ENCODE measurements at regions of chr6 and their contacts with region 1.

Region 1: GRCh38 chr6:130020907-130021629 is 2.7 kb downstream of the L3MBTL3 start:
- DNase-seq: peak; percentile 87
- H3K4me3 Mint-ChIP-seq: peak overlapping the region; percentile 95
- H3K27ac Mint-ChIP-seq: peak overlapping the region; percentile 89
- H3K4me1 Mint-ChIP-seq: peaks cover 22% of the 10 kb centered on the region
- H3K27me3 Mint-ChIP-seq: no peaks in the 10 kb centered on the region

Region 2: GRCh38 chr6:129498950-129499842 is 521.9 kb before region 1 on chr6:
- CTCF ChIA-PET with region 1: interaction called, 10 read pairs
- POLR2A ChIA-PET with region 1: no interaction called
- intact Hi-C with region 1: loop called (anchors 2 kb)
- DNase-seq: no peak
- H3K4me3 Mint-ChIP-seq: peak overlapping the region; percentile 46
- H3K27ac Mint-ChIP-seq: peak overlapping the region; percentile 50
- H3K4me1 Mint-ChIP-seq: peaks cover 55% of the 10 kb centered on the region
- H3K27me3 Mint-ChIP-seq: no peaks in the 10 kb centered on the region

Region 3: GRCh38 chr6:129730477-129731165 is 290.4 kb before region 1 on chr6:
- CTCF ChIA-PET with region 1: interaction called, 9 read pairs
- POLR2A ChIA-PET with region 1: no interaction called
- intact Hi-C with region 1: loop called (anchors 5 kb)
- DNase-seq: peak; percentile 19
- H3K4me3 Mint-ChIP-seq: no peak overlapping the region
- H3K27ac Mint-ChIP-seq: no peak overlapping the region
- H3K4me1 Mint-ChIP-seq: peaks cover 11% of the 10 kb centered on the region
- H3K27me3 Mint-ChIP-seq: no peaks in the 10 kb centered on the region

Region 4: DNA sequence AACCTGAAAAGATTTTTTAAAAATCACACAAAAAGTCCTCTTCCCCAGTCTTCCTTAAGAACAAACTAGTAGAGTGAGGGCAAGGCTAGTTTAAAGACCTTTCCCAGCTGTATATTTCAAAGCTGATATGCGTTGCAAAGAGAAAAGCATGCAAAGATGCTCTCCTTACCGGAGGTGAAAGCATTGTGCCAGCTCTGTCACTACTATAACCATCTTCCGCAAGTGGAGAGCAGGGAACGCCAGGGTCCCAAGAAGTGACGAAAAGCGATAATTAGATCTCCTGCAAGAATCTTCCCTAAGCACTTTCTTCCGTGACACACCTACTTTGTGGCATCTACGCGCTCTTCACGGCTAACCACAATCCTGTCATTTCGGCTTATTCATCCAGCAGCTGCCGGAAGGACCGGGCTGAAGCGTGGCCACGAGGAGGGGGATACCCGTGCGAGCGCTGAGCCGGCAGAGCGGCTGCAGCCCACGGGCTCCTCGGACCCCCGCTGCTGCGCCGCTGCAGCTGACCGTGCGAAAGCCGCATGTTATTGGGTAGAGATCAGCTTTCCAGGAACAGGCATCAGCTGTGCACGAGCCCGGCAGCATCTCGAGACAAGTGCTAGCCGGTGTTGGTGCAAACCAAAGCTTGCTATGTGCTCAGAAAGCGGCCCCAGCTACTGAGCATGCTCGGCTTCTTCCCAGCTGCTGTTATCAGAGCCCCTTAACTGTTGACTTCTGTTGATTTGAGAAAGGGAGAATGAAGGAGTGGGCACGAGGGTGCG is 253.9 kb before region 1 on chr6:
- CTCF ChIA-PET with region 1: interaction called, 3 read pairs
- POLR2A ChIA-PET with region 1: no interaction called
- intact Hi-C with region 1: loop called (anchors 1 kb)
- DNase-seq: peak; percentile 84
- H3K4me3 Mint-ChIP-seq: peak overlapping the region; percentile 71
- H3K27ac Mint-ChIP-seq: no peak overlapping the region
- H3K4me1 Mint-ChIP-seq: peaks cover 14% of the 10 kb centered on the region
- H3K27me3 Mint-ChIP-seq: peaks cover 15% of the 10 kb centered on the region

Region 5: DNA sequence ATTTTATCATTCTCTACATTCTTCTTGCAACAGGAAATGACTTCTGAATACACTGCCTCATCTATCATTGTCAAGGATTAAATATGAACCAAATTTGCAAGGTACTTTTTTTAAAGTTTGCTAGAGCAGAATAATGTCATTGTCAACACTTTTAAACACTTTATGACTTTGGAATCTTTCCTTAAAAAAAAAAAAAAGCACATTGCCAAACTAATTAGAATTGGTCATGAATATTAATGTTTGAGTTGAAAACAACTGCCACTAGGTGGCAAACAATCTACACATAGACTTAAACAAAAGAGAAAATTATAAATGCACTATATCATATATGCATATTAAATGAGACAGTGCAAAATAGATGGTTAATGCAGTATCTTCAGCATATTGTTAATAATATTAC is 127.4 kb before region 1 on chr6:
- CTCF ChIA-PET with region 1: interaction called, 6 read pairs
- POLR2A ChIA-PET with region 1: no interaction called
- intact Hi-C with region 1: loop called (anchors 1 kb)
- DNase-seq: no peak
- H3K4me3 Mint-ChIP-seq: no peak overlapping the region
- H3K27ac Mint-ChIP-seq: no peak overlapping the region
- H3K4me1 Mint-ChIP-seq: peaks cover 5% of the 10 kb centered on the region
- H3K27me3 Mint-ChIP-seq: no peaks in the 10 kb centered on the region

Region 6: DNA sequence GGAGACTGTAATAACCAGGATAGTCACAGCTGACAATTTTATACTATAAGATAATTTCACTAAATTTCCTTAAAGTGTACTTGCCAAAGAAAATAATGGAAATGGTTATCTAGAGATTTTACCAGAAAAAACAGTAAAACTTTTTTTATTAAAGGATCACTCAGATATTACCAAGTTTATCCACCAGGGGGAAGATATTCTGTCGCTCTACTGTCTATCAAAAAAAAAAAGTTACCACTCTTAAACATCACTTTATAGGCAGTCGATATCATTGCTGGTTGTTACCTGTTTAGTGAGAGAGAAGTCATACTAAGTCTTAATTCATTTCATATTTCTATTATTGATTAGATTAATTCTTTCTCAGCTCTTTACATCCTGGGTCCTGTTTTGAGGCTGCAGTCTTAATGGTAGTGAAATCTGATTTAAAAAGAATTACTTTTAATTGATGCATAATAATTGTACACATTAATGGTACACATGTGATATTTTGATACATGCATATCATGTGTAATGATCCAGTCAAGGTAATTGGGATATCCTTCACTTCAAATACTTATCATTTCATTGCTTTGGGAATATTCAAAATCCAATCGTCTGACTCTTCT is 16.2 kb after region 1 on chr6:
- CTCF ChIA-PET with region 1: interaction called, 10 read pairs
- POLR2A ChIA-PET with region 1: no interaction called
- intact Hi-C with region 1: no loop called
- DNase-seq: no peak
- H3K4me3 Mint-ChIP-seq: no peak overlapping the region
- H3K27ac Mint-ChIP-seq: no peak overlapping the region
- H3K4me1 Mint-ChIP-seq: peaks cover 43% of the 10 kb centered on the region
- H3K27me3 Mint-ChIP-seq: no peaks in the 10 kb centered on the region

Measured in activated CD4-positive, alpha-beta memory T cell treated with anti-CD3 and anti-CD28 coated beads for 36 hours (primary cell).